ENCODE measurements at regions of chr1 and their contacts with region 1.

Region 1: GRCh38 chr1:203038891-203039608 is 12.8 kb downstream of the PPFIA4 start:
- DNase-seq: peak; percentile 69 to 82
- ATAC-seq: peak; percentile 48 to 53
- H3K4me3 ChIP-seq: peak overlapping the region in 1 of 4 donors; percentile 24
- H3K27ac ChIP-seq: peak overlapping the region; percentile 95 to 98 (median 96)
- H3K4me1 ChIP-seq: peaks cover 51 to 64% of the 10 kb centered on the region in 2 donors
- H3K27me3 ChIP-seq: no peaks in the 10 kb centered on the region
- CTCF ChIP-seq: peak; percentile 92 to 95 (median 94)
- POLR2A ChIP-seq: no peak

Region 2: GRCh38 chr1:203084588-203085502 is 45.8 kb after region 1 on chr1:
- in situ Hi-C with region 1: no loop called
- intact Hi-C with region 1: loop called (anchors 1 kb)
- DNase-seq: peak; percentile 32 to 89
- ATAC-seq: peak; percentile 37 to 55
- H3K4me3 ChIP-seq: peak overlapping the region; percentile 58 to 78 (median 67)
- H3K27ac ChIP-seq: peak overlapping the region; percentile 97 to 100 (median 98)
- H3K4me1 ChIP-seq: peaks cover 49 to 51% of the 10 kb centered on the region in 2 donors
- H3K27me3 ChIP-seq: no peaks in the 10 kb centered on the region
- CTCF ChIP-seq: peak; percentile 72 to 90 (median 88)
- POLR2A ChIP-seq: no peak

Region 3: GRCh38 chr1:203148125-203148524 is 109.1 kb after region 1 on chr1:
- in situ Hi-C with region 1: no loop called
- intact Hi-C with region 1: no loop called
- DNase-seq: no peak
- ATAC-seq: no peak
- H3K4me3 ChIP-seq: no peak overlapping the region
- H3K27ac ChIP-seq: no peak overlapping the region
- H3K4me1 ChIP-seq: no peaks in the 10 kb centered on the region
- H3K27me3 ChIP-seq: no peaks in the 10 kb centered on the region
- CTCF ChIP-seq: peak in 1 of 5 experiments; percentile 18
- POLR2A ChIP-seq: no peak

Region 4: GRCh38 chr1:203172128-203173010 is 133.3 kb after region 1 on chr1:
- in situ Hi-C with region 1: loop called in 2 of 4 experiments (anchors 5 to 10 kb)
- intact Hi-C with region 1: loop called (anchors 1 kb)
- DNase-seq: peak; percentile 89 to 95
- ATAC-seq: peak; percentile 77 to 79
- H3K4me3 ChIP-seq: no peak overlapping the region
- H3K27ac ChIP-seq: peak overlapping the region; percentile 88 to 92 (median 88)
- H3K4me1 ChIP-seq: peaks cover 29 to 48% of the 10 kb centered on the region in 2 donors
- H3K27me3 ChIP-seq: no peaks in the 10 kb centered on the region
- CTCF ChIP-seq: peak; percentile 89 to 96 (median 89)
- POLR2A ChIP-seq: no peak

Region 5: DNA sequence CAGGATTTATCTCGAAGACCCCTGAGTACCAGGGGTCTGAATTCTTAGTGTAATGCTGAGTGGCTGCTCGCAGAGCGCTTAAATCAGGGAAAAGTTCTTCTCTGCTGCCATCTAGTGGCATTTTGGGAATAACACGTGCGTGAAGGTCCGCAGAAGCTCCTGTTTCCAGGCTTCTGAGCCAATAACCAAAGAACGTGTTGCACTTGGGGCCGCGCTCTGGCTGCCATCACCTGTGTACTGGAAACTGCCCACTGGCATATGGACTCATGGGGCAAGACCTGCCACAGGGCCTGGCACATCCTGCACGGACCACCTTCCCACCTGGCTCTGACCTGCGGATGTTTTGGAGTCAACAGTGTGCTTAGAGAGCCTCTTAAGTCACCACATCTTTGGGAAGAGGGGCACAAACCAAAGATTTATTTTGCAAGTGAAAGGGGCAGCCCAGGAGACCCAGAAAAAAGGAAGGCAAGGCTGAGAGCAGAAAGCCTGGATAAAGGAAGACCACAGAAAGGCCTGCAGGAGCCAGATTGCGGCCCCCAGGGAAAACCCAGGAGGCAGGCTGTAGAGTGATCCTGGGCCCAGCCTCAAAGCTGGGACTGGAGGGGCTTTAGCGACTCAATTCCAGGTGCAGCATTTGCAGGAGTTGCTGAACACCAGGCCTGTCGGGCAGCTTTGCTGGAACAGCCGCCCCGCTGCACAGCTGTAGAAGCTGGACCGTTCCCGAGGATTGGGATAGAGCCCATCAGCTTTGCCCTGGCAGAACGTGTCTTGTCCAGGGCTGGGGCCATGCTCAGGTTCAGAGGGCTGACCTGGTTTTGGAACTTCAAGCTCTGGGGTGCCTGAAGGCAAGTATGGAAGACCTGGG is 177.5 kb after region 1 on chr1:
- in situ Hi-C with region 1: loop called in 2 of 4 experiments (anchors 5 to 10 kb)
- intact Hi-C with region 1: loop called (anchors 1 kb)
- DNase-seq: peak; percentile 37 to 58
- ATAC-seq: peak; percentile 88 to 93
- H3K4me3 ChIP-seq: no peak overlapping the region
- H3K27ac ChIP-seq: no peak overlapping the region
- H3K4me1 ChIP-seq: peaks cover 3 to 8% of the 10 kb centered on the region in 2 donors
- H3K27me3 ChIP-seq: no peaks in the 10 kb centered on the region
- CTCF ChIP-seq: peak; percentile 74 to 88 (median 82)
- POLR2A ChIP-seq: no peak

Region 6: GRCh38 chr1:203326830-203327683 is 288.0 kb after region 1 on chr1:
- in situ Hi-C with region 1: no loop called
- intact Hi-C with region 1: loop called (anchors 5 kb)
- DNase-seq: peak; percentile 86 to 87
- ATAC-seq: peak; percentile 80 to 91
- H3K4me3 ChIP-seq: peak overlapping the region; percentile 48 to 66 (median 62)
- H3K27ac ChIP-seq: peak overlapping the region; percentile 78 to 90 (median 86)
- H3K4me1 ChIP-seq: peaks cover 24 to 31% of the 10 kb centered on the region in 2 donors
- H3K27me3 ChIP-seq: no peaks in the 10 kb centered on the region
- CTCF ChIP-seq: no peak
- POLR2A ChIP-seq: peak; percentile 39 to 73

Region 7: DNA sequence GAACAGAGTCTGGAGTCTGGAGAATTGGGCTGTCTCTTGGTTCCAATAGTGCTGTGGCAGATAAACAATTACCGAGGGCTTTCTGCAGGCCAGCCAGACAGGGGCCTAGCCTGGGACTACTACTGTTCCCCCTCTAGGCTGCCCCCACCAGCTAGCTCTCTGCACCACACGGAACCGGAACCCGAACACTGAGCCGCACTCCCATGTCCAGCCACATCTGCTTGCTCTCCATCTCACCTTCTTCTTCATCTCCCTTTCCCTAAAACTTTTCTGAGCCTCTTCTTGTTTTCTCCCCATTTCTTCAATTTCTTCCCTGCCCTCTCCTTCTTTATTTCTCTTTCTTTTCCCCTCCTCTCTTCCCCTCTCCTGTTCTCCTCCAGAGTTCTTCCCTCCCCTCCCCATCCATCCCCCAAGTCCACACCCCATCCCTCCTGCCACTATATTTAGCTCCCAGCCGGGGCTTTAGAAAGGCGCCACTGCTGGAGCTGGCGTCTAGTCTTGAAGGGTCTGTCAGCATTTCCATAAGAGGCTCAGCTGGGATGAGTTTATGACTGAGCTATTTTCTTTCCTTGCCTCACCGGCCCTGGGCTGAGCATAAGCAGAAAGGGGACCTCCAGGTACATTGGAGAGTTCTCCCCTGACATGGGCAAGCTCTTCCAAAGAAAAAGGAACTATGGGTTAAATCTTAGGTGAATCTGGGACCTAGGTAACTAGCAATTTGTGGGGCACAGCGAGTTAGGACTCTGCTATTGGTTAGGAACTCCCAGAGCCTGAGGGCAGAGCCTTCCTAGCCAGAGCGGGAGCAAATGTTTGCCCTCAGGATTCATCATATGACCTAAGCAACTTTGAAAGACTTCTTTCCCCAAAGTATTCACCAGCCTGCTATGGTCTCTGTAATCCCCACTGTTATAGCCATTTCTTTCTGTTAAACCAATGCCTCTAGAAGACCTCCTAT is 562.0 kb after region 1 on chr1:
- in situ Hi-C with region 1: no loop called
- intact Hi-C with region 1: no loop called
- DNase-seq: no peak
- ATAC-seq: no peak
- H3K4me3 ChIP-seq: no peak overlapping the region
- H3K27ac ChIP-seq: no peak overlapping the region
- H3K4me1 ChIP-seq: no peaks in the 10 kb centered on the region
- H3K27me3 ChIP-seq: no peaks in the 10 kb centered on the region
- CTCF ChIP-seq: no peak
- POLR2A ChIP-seq: no peak

Region 8: GRCh38 chr1:204080163-204080903 is 1041.3 kb after region 1 on chr1:
- in situ Hi-C with region 1: no loop called
- intact Hi-C with region 1: loop called (anchors 10 kb)
- DNase-seq: peak; percentile 60 to 66
- ATAC-seq: peak; percentile 17 to 33
- H3K4me3 ChIP-seq: peak overlapping the region; percentile 2 to 31 (median 12)
- H3K27ac ChIP-seq: peak overlapping the region; percentile 85 to 94 (median 92)
- H3K4me1 ChIP-seq: peaks cover 84 to 90% of the 10 kb centered on the region in 2 donors
- H3K27me3 ChIP-seq: no peaks in the 10 kb centered on the region
- CTCF ChIP-seq: peak in 1 of 5 experiments; percentile 12
- POLR2A ChIP-seq: no peak